SK-N-SH (cell line): ENCODE measurements at regions of chr6 and their contacts with region 1.

Region 1: DNA sequence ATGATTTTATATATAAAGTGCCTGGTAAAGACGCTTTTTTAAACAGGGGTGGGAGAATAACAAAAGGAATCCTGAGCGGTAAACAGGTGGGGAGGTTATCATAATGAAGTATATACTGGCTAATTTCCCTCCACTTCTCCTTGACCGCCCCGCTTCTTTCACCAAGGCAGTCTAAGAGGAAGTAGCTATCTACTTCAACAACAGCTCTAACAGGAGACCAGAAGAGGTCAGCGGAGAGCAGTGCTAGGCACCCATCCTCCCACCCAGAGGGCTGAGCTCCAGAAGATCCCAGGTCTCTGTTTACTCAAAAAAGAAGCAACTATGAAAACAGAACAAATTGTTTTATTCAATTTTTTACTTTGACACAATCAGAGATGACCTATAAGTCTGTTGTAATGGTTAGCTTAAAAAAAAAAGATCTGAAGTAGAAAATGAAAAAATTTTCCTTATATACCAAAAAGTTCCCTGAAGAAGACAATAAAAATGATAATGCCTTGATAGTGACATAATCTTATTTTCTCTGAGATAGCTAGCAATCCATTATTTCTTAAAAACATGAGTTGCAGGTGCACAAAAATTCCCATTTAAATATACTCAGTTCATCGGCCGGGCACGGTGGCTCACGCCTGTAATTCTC is 141.1 kb downstream of the PDSS2 start:
- DNase-seq: peak; percentile 64
- H3K4me3 ChIP-seq: no peak overlapping the region
- H3K27ac ChIP-seq: no peak overlapping the region
- H3K4me1 ChIP-seq: peaks cover 2 to 24% of the 10 kb centered on the region in 2 experiments; a peak in 3 of 4 replicates
- H3K27me3 ChIP-seq: no peaks in the 10 kb centered on the region
- CTCF ChIP-seq: peak; percentile 84
- EP300 ChIP-seq: no peak
- RAD21 ChIP-seq: peak; percentile 92

Region 2: GRCh38 chr6:106979427-106979884 is 338.8 kb before region 1 on chr6:
- CTCF ChIA-PET with region 1: no interaction called
- POLR2A ChIA-PET with region 1: no interaction called
- DNase-seq: peak; percentile 82
- H3K4me3 ChIP-seq: peak overlapping the region in 1 of 2 experiments; percentile 24; a peak in 1 of 4 replicates
- H3K27ac ChIP-seq: no peak overlapping the region
- H3K4me1 ChIP-seq: no peaks in the 10 kb centered on the region; a peak in 1 of 4 replicates
- H3K27me3 ChIP-seq: peaks cover 30% of the 10 kb centered on the region; the same call in 1 of the 2 replicates
- CTCF ChIP-seq: peak; percentile 96
- EP300 ChIP-seq: no peak
- RAD21 ChIP-seq: peak; percentile 99

Region 3: GRCh38 chr6:107132330-107132954 is 185.8 kb before region 1 on chr6:
- CTCF ChIA-PET with region 1: interaction called, 11 read pairs
- POLR2A ChIA-PET with region 1: no interaction called
- DNase-seq: peak; percentile 55
- H3K4me3 ChIP-seq: no peak overlapping the region
- H3K27ac ChIP-seq: no peak overlapping the region
- H3K4me1 ChIP-seq: peaks cover 0 to 2% of the 10 kb centered on the region in 2 experiments; a peak in 1 of 4 replicates
- H3K27me3 ChIP-seq: no peaks in the 10 kb centered on the region
- CTCF ChIP-seq: peak; percentile 71
- EP300 ChIP-seq: no peak
- RAD21 ChIP-seq: peak; percentile 72

Region 4: GRCh38 chr6:107292715-107293271 is 25.4 kb before region 1 on chr6:
- CTCF ChIA-PET with region 1: interaction called, 19 read pairs
- POLR2A ChIA-PET with region 1: no interaction called
- DNase-seq: peak; percentile 69
- H3K4me3 ChIP-seq: no peak overlapping the region
- H3K27ac ChIP-seq: peak overlapping the region in 1 of 2 experiments; percentile 26; a peak in 1 of 4 replicates
- H3K4me1 ChIP-seq: peaks cover 0 to 10% of the 10 kb centered on the region in 2 experiments; a peak in 2 of 4 replicates
- H3K27me3 ChIP-seq: no peaks in the 10 kb centered on the region
- CTCF ChIP-seq: no peak
- EP300 ChIP-seq: peak in 1 of 2 experiments; percentile 66; a peak in 2 of 4 replicates
- RAD21 ChIP-seq: no peak; the same call in none of the 2 replicates

Region 5: GRCh38 chr6:107342144-107342543 is 23.9 kb after region 1 on chr6:
- CTCF ChIA-PET with region 1: interaction called, 26 read pairs
- POLR2A ChIA-PET with region 1: no interaction called
- DNase-seq: no peak
- H3K4me3 ChIP-seq: no peak overlapping the region
- H3K27ac ChIP-seq: no peak overlapping the region
- H3K4me1 ChIP-seq: peaks cover 0 to 3% of the 10 kb centered on the region in 2 experiments; a peak in 2 of 4 replicates
- H3K27me3 ChIP-seq: no peaks in the 10 kb centered on the region
- CTCF ChIP-seq: no peak
- EP300 ChIP-seq: no peak
- RAD21 ChIP-seq: no peak

Region 6: GRCh38 chr6:107459283-107460082 is 141.3 kb after region 1 on chr6 and contains the start of gene PDSS2:
- CTCF ChIA-PET with region 1: interaction called, 20 read pairs
- POLR2A ChIA-PET with region 1: interaction called, 4 read pairs
- DNase-seq: peak; percentile 96
- H3K4me3 ChIP-seq: peak within 1 kb of the TSS; percentile 97 to 98
- H3K27ac ChIP-seq: peak within 1 kb of the TSS; percentile 46 to 87; a peak in 3 of 4 replicates
- H3K4me1 ChIP-seq: peaks cover 5 to 8% of the 10 kb centered on the region in 2 experiments; a peak in 3 of 4 replicates
- H3K27me3 ChIP-seq: no peaks in the 10 kb centered on the region
- CTCF ChIP-seq: peak; percentile 71
- EP300 ChIP-seq: peak in 1 of 2 experiments; percentile 29; a peak in 1 of 4 replicates
- RAD21 ChIP-seq: peak; percentile 41
- polyA plus RNA-seq, gene PDSS2: 5.6 and 6.3 TPM in 2 replicates

Region 7: GRCh38 chr6:107657755-107658461 is 339.7 kb after region 1 on chr6:
- CTCF ChIA-PET with region 1: interaction called, 32 read pairs
- POLR2A ChIA-PET with region 1: no interaction called
- DNase-seq: peak; percentile 77
- H3K4me3 ChIP-seq: peak overlapping the region; percentile 36 to 55
- H3K27ac ChIP-seq: peak overlapping the region; percentile 24 to 78; a peak in 3 of 4 replicates
- H3K4me1 ChIP-seq: peaks cover 0 to 53% of the 10 kb centered on the region in 2 experiments; a peak in 2 of 4 replicates
- H3K27me3 ChIP-seq: no peaks in the 10 kb centered on the region
- CTCF ChIP-seq: peak; percentile 45
- EP300 ChIP-seq: no peak
- RAD21 ChIP-seq: 0 out of 2 replicates have a peak, but pooled peaks have one; percentile 17

Region 8: GRCh38 chr6:107704347-107705013 is 386.3 kb after region 1 on chr6:
- CTCF ChIA-PET with region 1: interaction called, 11 read pairs
- POLR2A ChIA-PET with region 1: no interaction called
- DNase-seq: peak; percentile 69
- H3K4me3 ChIP-seq: no peak overlapping the region; a peak in 1 of 4 replicates
- H3K27ac ChIP-seq: no peak overlapping the region; a peak in 1 of 4 replicates
- H3K4me1 ChIP-seq: peaks cover 0 to 3% of the 10 kb centered on the region in 2 experiments; a peak in 1 of 4 replicates
- H3K27me3 ChIP-seq: no peaks in the 10 kb centered on the region
- CTCF ChIP-seq: peak; percentile 83
- EP300 ChIP-seq: no peak
- RAD21 ChIP-seq: peak; percentile 69